ENCODE measurements at regions of chr3 and their contacts with region 1.

Region 1: DNA sequence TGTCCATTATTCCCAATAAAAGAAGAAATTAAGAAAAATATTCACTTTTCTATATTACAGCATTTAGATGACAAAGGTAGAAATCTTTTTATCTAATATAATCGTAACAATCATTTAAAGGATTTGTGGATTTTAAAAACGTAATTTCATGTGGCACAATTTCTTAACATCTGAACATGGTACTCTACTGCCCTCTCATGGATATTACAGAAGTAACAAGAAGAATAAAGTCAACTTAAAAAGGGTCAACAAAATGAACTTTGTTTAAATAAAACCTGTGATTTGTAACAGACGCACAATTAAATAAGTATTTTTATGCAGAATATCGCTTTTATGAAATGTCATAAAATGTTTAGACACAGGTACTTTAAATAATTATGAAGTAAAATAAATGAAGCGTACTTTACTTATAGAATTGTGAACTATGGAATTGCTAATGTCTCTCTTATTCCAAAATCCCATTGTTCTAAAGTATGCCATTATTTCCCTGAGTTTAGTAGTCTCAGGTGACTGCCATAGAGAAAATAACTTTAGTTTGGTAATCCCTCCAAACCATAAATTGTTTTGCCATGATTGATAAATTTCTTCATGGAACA is 366.8 kb upstream of the ZNF385D start:
- DNase-seq: no peak
- ATAC-seq: no peak
- H3K4me3 ChIP-seq: no peak overlapping the region
- H3K27ac ChIP-seq: no peak overlapping the region
- H3K4me1 ChIP-seq: no peaks in the 10 kb centered on the region
- H3K27me3 ChIP-seq: no peaks in the 10 kb centered on the region

Region 2: GRCh38 chr3:20225769-20226168 is 1892.1 kb before region 1 on chr3:
- intact Hi-C with region 1: loop called (anchors 5 to 10 kb)
- DNase-seq: no peak
- ATAC-seq: no peak
- H3K4me3 ChIP-seq: no peak overlapping the region
- H3K27ac ChIP-seq: no peak overlapping the region
- H3K4me1 ChIP-seq: no peaks in the 10 kb centered on the region
- H3K27me3 ChIP-seq: no peaks in the 10 kb centered on the region

Region 3: DNA sequence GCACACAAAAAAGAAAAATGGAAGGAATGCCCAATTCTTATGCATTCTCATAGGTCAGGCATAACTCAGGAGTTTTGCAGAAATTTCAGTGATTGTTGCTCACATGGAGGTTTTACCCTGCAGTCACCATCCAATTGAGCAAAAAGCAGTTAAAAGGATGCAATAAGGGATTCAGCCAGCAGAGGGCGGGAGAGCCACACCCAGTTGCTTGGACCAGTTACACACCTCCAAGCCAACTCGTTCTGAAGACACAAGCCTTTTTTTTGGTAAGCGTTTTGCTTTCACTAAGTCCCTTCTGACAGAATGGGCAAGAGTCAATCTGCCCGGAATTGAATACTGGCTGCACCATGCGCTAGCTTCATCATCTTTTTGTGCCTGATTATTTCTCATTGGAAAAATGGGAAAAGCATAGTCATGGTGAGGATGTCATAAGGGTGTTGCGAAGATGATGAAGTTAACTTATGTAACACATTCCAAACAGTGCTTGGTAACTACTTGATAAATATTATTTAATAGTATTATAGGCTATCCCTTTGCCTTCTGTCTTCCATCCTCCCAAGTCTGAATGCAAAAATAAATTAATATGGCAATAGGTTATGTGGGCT is 1777.4 kb before region 1 on chr3:
- intact Hi-C with region 1: loop called in 1 of 2 experiments (anchors 5 kb)
- DNase-seq: peak in 1 of 2 donors; percentile 59
- ATAC-seq: peak; percentile 84
- H3K4me3 ChIP-seq: no peak overlapping the region
- H3K27ac ChIP-seq: no peak overlapping the region
- H3K4me1 ChIP-seq: no peaks in the 10 kb centered on the region
- H3K27me3 ChIP-seq: no peaks in the 10 kb centered on the region

Region 4: DNA sequence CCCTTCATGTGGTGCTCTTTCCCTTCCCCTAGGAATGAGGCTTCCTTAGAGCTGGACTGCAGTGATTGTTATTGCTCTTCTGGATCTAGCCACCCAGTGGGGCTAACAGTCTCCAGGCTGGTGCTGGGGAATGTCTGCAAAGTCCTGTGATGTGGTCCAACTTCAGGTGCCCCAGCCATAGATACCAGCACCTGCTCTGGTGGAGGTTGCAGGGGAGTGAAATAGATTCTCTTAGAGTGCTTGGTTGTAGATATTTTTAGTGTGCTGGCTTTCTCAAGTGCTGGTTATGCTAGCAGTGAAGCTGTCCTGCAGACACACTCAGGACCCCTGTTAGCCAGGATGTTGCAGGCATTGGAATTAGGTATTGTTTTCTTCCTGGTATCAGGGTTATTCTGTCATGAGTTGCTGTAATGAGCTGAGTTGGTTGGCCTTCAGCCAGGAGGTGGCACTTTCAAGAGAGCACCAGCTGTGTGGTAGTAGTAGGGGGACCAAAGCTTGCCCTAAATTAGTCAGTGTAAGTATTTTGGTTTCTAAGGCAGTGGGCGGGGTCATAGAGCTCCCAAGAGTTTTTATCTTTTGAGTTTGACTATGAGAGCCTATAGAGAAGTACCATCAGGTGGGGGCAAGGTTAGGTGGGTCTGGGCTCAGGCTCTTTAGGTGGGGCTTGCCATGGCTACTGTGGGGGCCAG is 1614.3 kb before region 1 on chr3:
- intact Hi-C with region 1: loop called in 1 of 2 experiments (anchors 10 kb)
- DNase-seq: no peak
- ATAC-seq: no peak
- H3K4me3 ChIP-seq: no peak overlapping the region
- H3K27ac ChIP-seq: no peak overlapping the region
- H3K4me1 ChIP-seq: no peaks in the 10 kb centered on the region
- H3K27me3 ChIP-seq: no peaks in the 10 kb centered on the region

Region 5: GRCh38 chr3:21752749-21753347 is 365.0 kb before region 1 on chr3:
- intact Hi-C with region 1: loop called (anchors 5 to 10 kb)
- DNase-seq: peak in 1 of 2 donors; percentile 29
- ATAC-seq: peak; percentile 72
- H3K4me3 ChIP-seq: no peak overlapping the region
- H3K27ac ChIP-seq: no peak overlapping the region
- H3K4me1 ChIP-seq: no peaks in the 10 kb centered on the region
- H3K27me3 ChIP-seq: no peaks in the 10 kb centered on the region

Region 6: DNA sequence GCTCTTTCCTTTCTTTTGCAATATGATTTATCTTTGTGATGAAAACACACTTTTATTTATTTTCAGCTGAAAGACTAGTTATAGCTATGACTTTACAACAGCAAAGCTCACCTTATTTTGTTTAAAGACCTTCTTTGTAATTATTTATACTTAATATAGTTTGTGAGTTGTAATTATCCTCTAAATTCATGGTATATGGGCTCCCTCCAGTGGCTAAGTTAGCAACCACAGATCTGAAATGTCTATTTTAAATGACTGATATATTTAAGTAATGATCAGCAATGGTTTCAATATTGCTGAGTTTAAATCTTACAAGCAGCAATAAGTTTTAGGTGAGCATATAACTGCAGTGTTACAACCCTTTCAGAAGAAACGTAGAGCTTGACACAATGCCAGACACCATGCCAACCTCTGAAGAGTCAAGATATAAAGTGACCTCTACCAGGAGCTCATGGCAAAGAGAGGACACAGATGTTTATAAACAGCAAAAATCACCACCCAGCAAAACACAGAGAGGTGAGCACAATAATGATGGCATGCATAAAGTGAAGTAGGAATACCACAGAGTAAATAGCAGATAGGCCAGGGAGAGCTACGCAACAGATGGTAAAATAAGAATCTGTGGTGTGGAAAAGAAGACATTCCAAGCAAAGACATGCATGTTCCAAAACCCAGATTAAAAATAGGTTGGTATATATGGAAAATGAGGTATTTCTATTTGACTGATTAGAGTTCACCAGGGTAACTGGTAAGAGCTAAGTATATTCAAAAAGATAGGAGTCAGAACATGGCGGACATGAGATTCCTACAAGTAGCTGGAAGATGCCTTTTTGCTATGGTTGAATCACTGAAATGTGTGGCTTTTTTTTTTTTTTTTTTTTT is 223.1 kb before region 1 on chr3:
- intact Hi-C with region 1: loop called in 1 of 2 experiments (anchors 10 kb)
- DNase-seq: no peak
- ATAC-seq: peak; percentile 69
- H3K4me3 ChIP-seq: no peak overlapping the region
- H3K27ac ChIP-seq: no peak overlapping the region
- H3K4me1 ChIP-seq: no peaks in the 10 kb centered on the region
- H3K27me3 ChIP-seq: no peaks in the 10 kb centered on the region

Region 7: DNA sequence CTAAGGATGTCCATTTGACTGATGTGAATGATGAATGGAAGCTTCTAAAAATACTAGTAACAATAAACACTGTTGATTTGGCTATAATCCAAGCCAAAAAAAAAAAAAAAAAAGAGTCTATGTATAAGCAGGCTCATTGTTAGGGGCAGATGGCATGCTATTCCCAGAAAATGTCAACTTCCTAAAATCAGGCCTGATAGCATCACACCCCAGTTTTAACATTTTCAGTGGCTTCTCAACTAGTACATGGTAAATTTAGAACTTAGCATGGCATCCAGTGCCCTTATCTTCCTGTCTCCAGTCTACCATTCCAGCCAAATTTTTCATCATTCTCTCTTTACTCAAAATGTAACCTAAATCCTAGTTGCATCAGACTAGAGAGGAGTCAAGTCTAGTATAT is 78.7 kb before region 1 on chr3:
- intact Hi-C with region 1: no loop called
- DNase-seq: no peak
- ATAC-seq: no peak
- H3K4me3 ChIP-seq: no peak overlapping the region
- H3K27ac ChIP-seq: no peak overlapping the region
- H3K4me1 ChIP-seq: no peaks in the 10 kb centered on the region
- H3K27me3 ChIP-seq: no peaks in the 10 kb centered on the region

Region 8: GRCh38 chr3:22231061-22231460 is 113.2 kb after region 1 on chr3:
- intact Hi-C with region 1: no loop called
- DNase-seq: no peak
- ATAC-seq: no peak
- H3K4me3 ChIP-seq: no peak overlapping the region
- H3K27ac ChIP-seq: no peak overlapping the region
- H3K4me1 ChIP-seq: no peaks in the 10 kb centered on the region
- H3K27me3 ChIP-seq: peaks cover 0 to 1% of the 10 kb centered on the region in 2 donors

Measured in aorta (tissue), 5 donors.